A549 (cell line): ENCODE measurements at regions of chr17 and their contacts with region 1.

Region 1: DNA sequence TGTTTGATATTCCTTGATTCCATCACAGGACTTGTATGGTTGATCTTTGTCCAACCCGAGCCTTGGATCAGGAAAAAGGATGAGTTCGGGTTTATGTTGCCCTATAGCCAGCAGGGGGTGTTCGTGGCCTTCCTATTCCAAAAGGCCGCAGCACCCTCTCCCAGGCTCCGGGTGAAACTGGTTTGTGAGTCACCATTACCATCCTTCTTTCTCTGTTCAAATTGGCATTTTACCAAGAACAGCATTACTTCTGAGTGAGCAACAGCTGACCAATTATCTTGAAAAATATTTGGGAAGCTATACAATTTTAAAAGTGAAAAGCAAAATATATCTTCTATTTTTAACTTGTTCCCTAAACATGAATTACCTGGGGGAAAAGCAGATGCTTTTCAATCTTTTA is 24.3 kb upstream of the KRT20 start:
- DNase-seq: peak; percentile 91 to 92
- ATAC-seq: peak; percentile 91 to 95
- H3K4me3 ChIP-seq: no peak overlapping the region
- H3K27ac ChIP-seq: peak overlapping the region; percentile 62 to 65
- H3K4me1 ChIP-seq: peaks cover 31% of the 10 kb centered on the region
- CTCF ChIP-seq: peak; percentile 98
- EP300 ChIP-seq: no peak
- POLR2A ChIP-seq: no peak
- RAD21 ChIP-seq: peak; percentile 99 to 100

Region 2: DNA sequence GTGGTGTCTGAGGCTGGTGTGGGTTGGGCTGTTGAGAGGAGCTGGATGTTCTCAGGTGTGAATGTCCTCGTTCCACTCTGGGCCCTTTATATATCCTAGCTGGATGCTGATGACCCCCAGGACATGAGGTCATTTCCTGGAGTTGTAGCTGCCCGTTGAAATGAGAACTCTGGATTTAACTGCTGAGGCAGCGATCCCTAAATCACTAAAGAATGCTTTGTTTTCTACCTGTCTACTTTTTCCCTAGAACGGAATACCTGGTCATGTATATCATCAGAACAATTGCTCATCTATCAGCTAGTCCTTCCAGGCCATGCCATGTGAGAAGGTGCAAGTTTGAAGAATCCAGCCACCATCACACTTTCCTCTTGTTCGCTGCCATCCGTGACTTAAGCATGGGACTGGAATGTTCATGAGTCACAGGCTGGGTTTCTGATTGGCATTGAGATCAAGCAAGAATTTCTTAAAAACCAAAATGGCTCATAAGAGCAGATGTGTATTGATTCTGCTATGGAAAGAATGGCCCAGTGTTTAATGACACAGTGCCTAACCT is 150.8 kb after region 1 on chr17 and contains the start of gene KRTAP2-3:
- CTCF ChIA-PET with region 1: interaction called, 12 read pairs
- POLR2A ChIA-PET with region 1: no interaction called
- DNase-seq: peak; percentile 49 to 55
- ATAC-seq: peak; percentile 55 to 57; a peak in 4 of 6 replicates
- H3K4me3 ChIP-seq: no peak within 1 kb of the TSS
- H3K27ac ChIP-seq: peak within 1 kb of the TSS; percentile 34 to 70; a peak in 5 of 6 replicates
- H3K4me1 ChIP-seq: peaks cover 34% of the 10 kb centered on the region
- CTCF ChIP-seq: no peak
- EP300 ChIP-seq: no peak
- POLR2A ChIP-seq: no peak
- RAD21 ChIP-seq: no peak
- polyA plus RNA-seq, gene KRTAP2-3: not detected in 2 replicates

Region 3: GRCh38 chr17:41403798-41404671 is 494.7 kb after region 1 on chr17:
- CTCF ChIA-PET with region 1: interaction called, 10 read pairs
- POLR2A ChIA-PET with region 1: no interaction called
- DNase-seq: peak; percentile 77 to 82
- ATAC-seq: peak; percentile 75 to 81; a peak in 5 of 6 replicates
- H3K4me3 ChIP-seq: no peak overlapping the region
- H3K27ac ChIP-seq: peak overlapping the region; percentile 34 to 66; a peak in 5 of 6 replicates
- H3K4me1 ChIP-seq: peaks cover 18% of the 10 kb centered on the region
- CTCF ChIP-seq: no peak
- EP300 ChIP-seq: peak in 1 of 2 experiments; percentile 46; a peak in 1 of 5 replicates
- POLR2A ChIP-seq: no peak
- RAD21 ChIP-seq: no peak

Region 4: GRCh38 chr17:41496820-41497408 is 587.6 kb after region 1 on chr17:
- CTCF ChIA-PET with region 1: interaction called, 20 read pairs
- POLR2A ChIA-PET with region 1: no interaction called
- DNase-seq: peak; percentile 91 to 95
- ATAC-seq: peak; percentile 91 to 99
- H3K4me3 ChIP-seq: no peak overlapping the region
- H3K27ac ChIP-seq: peak overlapping the region; percentile 76 to 88
- H3K4me1 ChIP-seq: peaks cover 27% of the 10 kb centered on the region
- CTCF ChIP-seq: peak; percentile 80
- EP300 ChIP-seq: no peak
- POLR2A ChIP-seq: peak; percentile 43
- RAD21 ChIP-seq: peak; percentile 89 to 92